ENCODE measurements at regions of chr9 and their contacts with region 1.

Region 1: DNA sequence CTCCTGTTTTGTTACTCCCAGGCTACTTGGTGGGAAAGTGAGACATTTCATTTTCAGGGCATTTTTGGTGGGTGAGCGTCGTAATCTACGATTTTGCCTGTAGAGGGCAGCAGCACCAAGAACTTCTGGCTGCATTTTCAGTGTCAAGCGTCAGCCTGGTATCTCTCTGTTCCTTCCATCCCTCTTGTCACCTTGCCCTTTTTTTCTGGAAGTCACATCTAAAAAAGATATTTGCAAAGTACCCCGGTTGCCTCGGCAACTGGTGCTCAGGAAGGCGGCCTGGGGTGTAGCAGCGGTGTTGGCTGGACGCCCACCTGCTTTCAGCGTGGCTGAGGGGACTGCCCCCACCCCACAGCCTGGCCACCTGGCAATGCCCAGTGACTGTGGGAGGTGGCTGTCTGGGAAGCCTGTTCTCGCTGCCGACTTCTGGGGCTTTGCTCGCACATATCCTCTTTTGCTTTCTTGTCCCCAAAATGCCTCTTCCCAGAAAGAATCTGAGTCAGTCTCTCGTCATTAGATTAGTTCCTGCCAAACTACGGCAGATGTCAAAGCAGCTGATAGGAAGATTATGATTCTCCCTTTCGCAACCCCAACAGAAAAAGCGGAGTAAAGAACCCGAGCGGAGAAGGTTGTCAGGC is 84.5 kb downstream of the ACER2 start:
- DNase-seq: peak; percentile 59 to 92 (median 80)
- H3K4me3 ChIP-seq: peak overlapping the region; percentile 3 to 66 (median 45)
- H3K27ac ChIP-seq: peak overlapping the region; percentile 71 to 100 (median 97)
- H3K27me3 ChIP-seq: no peaks in the 10 kb centered on the region
- CTCF ChIP-seq: peak; percentile 59 to 93 (median 84)

Region 2: DNA sequence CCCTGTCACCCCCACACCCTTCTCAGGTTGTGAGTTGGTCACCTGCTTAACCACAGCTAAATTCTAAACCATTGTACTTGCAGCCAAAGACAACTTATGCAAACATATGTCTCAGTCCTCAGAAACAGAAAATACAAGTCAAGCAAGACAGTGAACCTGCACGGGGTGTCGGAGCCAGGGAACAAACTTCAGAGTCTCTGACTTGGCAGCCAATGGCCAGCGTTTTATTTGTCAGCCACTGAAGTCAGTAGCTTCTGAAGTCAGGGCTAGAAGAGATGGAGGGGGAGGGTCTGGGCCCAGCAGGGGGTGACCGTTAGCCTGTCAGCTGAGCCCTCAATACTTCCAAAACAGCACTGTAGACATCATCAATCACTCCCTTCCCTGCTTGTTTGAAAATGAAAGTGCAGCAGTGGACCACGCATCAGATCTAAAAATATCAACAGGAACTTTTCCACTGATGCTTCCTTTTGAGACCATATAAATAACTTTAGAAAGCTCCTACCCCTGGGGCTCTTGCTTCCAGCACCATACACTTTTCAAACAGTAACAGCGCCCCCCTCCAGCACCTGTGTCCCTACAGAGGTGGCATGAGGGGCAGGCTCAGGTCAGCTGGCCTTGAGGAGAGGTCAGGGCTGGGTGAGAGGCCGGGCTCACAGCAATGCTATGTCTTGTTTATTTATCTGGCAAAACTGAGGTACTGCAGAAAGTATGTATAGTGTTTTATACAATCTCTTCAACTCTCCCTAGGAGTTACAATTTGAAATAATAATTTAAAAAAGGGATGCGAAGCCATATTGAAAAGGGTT is 58.0 kb after region 1 on chr9:
- intact Hi-C with region 1: loop called (anchors 5 to 10 kb)
- DNase-seq: peak in 1 of 10 donors; percentile 27
- H3K4me3 ChIP-seq: peak overlapping the region in 31 of 59 donors; percentile 1 to 47 (median 22)
- H3K27ac ChIP-seq: peak overlapping the region in 57 of 59 donors; percentile 0 to 91 (median 73)
- H3K27me3 ChIP-seq: no peaks in the 10 kb centered on the region
- CTCF ChIP-seq: peak in 13 of 56 donors; percentile 1 to 30 (median 20)

Region 3: DNA sequence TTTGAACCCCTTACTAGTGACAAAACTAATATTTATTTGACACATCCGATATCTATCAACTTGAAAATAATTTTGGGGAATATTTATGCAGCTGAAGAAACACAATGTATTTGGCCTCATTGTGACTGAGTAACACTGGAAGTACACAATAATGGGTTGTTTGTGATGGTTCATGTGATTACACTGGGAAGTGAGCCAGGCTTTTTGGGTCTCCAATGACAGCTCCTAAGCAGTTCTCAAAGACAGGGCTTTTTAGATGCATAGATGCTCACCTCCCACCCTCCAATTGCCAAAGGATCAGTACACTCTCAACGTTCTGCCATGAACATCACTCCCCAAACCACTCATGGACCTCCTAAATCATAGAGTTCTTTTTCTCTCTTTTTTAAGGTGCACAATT is 125.5 kb after region 1 on chr9:
- intact Hi-C with region 1: loop called in 1 of 2 experiments (anchors 2 kb)
- DNase-seq: peak in 4 of 10 donors; percentile 46 to 81 (median 67)
- H3K4me3 ChIP-seq: peak overlapping the region in 5 of 59 donors; percentile 1 to 20 (median 15)
- H3K27ac ChIP-seq: peak overlapping the region; percentile 82 to 100 (median 96)
- H3K27me3 ChIP-seq: no peaks in the 10 kb centered on the region
- CTCF ChIP-seq: peak in 2 of 56 donors; percentile 5 to 15

Region 4: DNA sequence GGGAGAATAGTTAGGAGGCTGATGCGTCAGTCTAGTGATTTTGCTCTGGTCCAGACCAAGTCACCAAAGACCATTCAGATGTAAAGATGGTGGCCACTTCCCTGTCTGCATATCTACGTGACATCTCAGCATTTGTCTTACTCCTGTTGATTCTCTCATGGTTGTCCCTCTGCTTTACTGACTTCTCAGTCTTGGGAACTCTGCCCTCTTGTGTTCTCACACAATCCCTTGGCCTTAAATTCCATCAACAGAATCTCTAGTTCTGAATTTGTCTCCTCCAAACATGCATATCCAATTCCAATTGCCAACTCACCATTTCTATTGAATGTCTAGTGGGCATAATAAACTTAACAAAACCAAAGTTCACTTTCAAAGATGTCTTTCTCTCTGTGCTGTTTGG is 147.8 kb after region 1 on chr9:
- intact Hi-C with region 1: loop called (anchors 1 to 2 kb)
- DNase-seq: no peak
- H3K4me3 ChIP-seq: no peak overlapping the region
- H3K27ac ChIP-seq: peak overlapping the region in 58 of 59 donors; percentile 51 to 96 (median 86)
- H3K27me3 ChIP-seq: no peaks in the 10 kb centered on the region
- CTCF ChIP-seq: peak in 52 of 56 donors; percentile 11 to 72 (median 43)

Region 5: GRCh38 chr9:19699756-19700155 is 206.5 kb after region 1 on chr9:
- intact Hi-C with region 1: loop called (anchors 5 kb)
- DNase-seq: no peak
- H3K4me3 ChIP-seq: no peak overlapping the region
- H3K27ac ChIP-seq: peak overlapping the region; percentile 59 to 99 (median 93)
- H3K27me3 ChIP-seq: no peaks in the 10 kb centered on the region
- CTCF ChIP-seq: no peak

Region 6: GRCh38 chr9:19788614-19789271 is 295.4 kb after region 1 on chr9 and contains the start of gene SLC24A2:
- intact Hi-C with region 1: loop called in 1 of 2 experiments (anchors 5 kb)
- DNase-seq: peak; percentile 28 to 86 (median 70)
- H3K4me3 ChIP-seq: peak within 1 kb of the TSS; percentile 53 to 89 (median 77)
- H3K27ac ChIP-seq: peak within 1 kb of the TSS; percentile 60 to 98 (median 95)
- H3K27me3 ChIP-seq: peaks cover 0 to 12% (median 0%) of the 10 kb centered on the region in 45 donors
- CTCF ChIP-seq: peak in 10 of 56 donors; percentile 5 to 41 (median 13)
- total RNA-seq, gene SLC24A2: 72.9 to 391 (median 239) TPM

Measured in dorsolateral prefrontal cortex (tissue), 120 donors.